Left ventricle myocardium inferior (tissue), 1 donor: ENCODE measurements at regions of chr5 and their contacts with region 1.

Region 1: GRCh38 chr5:52787600-52788504 is at the starts of genes ITGA1 and PELO:
- DNase-seq: peak; percentile 67
- H3K4me3 ChIP-seq: peak within 1 kb of the TSS; percentile 75
- H3K27ac ChIP-seq: peak within 1 kb of the TSS; percentile 91
- H3K4me1 ChIP-seq: peaks cover 51% of the 10 kb centered on the region
- H3K27me3 ChIP-seq: no peaks in the 10 kb centered on the region
- CTCF ChIP-seq: peak; percentile 63
- total RNA-seq, gene ITGA1: 28.4 TPM
- total RNA-seq, gene PELO: 19.7 TPM

Region 2: DNA sequence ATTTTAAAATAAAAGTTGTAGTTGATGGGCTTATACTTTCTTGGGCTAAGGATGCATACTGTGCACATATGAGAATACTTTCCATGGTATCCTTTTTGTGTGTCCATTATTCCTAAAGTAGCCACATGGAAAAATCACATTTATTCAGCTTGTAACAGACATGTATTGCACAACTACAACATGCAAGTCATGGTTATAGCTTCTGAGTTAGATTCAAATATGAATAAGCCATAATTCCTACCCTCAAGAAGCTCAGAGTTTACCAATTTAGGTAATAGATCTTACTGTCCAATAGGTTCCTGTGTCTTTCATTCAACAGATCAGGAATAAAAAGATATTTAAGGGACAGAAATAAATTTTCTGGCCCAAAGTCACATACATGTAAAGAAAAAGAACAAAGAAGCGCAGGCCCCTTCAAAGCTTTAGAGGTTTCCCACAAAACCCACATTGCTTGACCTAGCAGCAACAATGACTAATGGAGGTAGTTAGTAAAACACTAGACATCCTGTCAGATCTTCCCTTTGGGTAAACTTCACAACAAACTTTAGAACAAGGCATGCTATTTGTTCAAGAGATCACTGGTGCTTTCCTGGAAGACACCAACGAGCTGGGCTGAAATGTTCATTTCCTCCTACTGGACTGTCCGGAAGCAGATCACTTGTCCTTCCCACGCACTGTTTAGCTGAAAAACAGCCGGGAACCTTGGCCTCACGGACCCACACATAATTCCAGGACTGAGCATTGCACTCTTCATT is 78.5 kb before region 1 on chr5:
- intact Hi-C with region 1: loop called (anchors 10 kb)
- DNase-seq: no peak
- H3K4me3 ChIP-seq: no peak overlapping the region
- H3K27ac ChIP-seq: peak overlapping the region; percentile 74
- H3K4me1 ChIP-seq: peaks cover 52% of the 10 kb centered on the region
- H3K27me3 ChIP-seq: no peaks in the 10 kb centered on the region
- CTCF ChIP-seq: no peak